Panc1 (cell line): ENCODE measurements at regions of chr12 and their contacts with region 1.

Region 1: GRCh38 chr12:58540480-58541299 is 379.6 kb downstream of the LRIG3 start:
- DNase-seq: peak; percentile 70
- ATAC-seq: peak; percentile 98
- H3K4me3 ChIP-seq: no peak overlapping the region
- H3K27ac ChIP-seq: no peak overlapping the region; the same call in 1 of the 2 replicates
- H3K4me1 ChIP-seq: no peaks in the 10 kb centered on the region
- H3K27me3 ChIP-seq: no peaks in the 10 kb centered on the region
- CTCF ChIP-seq: peak; percentile 89

Region 2: GRCh38 chr12:58648176-58648575 is 107.5 kb after region 1 on chr12:
- CTCF ChIA-PET with region 1: no interaction called
- POLR2A ChIA-PET with region 1: no interaction called
- in situ Hi-C with region 1: no loop called
- intact Hi-C with region 1: no loop called
- DNase-seq: no peak
- ATAC-seq: no peak
- H3K4me3 ChIP-seq: no peak overlapping the region
- H3K27ac ChIP-seq: no peak overlapping the region
- H3K4me1 ChIP-seq: no peaks in the 10 kb centered on the region
- H3K27me3 ChIP-seq: no peaks in the 10 kb centered on the region
- CTCF ChIP-seq: no peak

Region 3: DNA sequence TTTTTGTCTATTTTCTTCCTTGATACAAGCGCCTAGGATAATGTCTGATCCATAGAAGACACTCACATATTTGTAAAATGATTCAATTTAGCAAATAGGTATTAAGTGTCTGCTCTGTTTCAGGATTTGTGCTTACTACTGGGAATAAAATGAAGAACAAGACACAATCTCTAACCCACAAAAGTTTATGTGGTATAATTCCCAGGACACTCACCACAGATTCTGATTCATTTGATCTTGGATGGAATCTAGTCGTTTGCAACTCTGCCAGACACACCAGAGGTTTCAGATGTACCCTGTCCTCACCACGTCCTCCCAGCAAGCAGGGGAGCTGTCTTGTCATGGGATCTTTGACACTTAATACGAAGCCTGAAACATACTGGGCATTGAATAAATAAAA is 171.3 kb after region 1 on chr12:
- CTCF ChIA-PET with region 1: interaction called, 13 read pairs
- POLR2A ChIA-PET with region 1: no interaction called
- in situ Hi-C with region 1: no loop called
- intact Hi-C with region 1: no loop called
- DNase-seq: no peak
- ATAC-seq: no peak
- H3K4me3 ChIP-seq: no peak overlapping the region
- H3K27ac ChIP-seq: no peak overlapping the region
- H3K4me1 ChIP-seq: no peaks in the 10 kb centered on the region
- H3K27me3 ChIP-seq: no peaks in the 10 kb centered on the region
- CTCF ChIP-seq: no peak

Region 4: GRCh38 chr12:59087077-59087673 is 546.5 kb after region 1 on chr12:
- CTCF ChIA-PET with region 1: no interaction called
- POLR2A ChIA-PET with region 1: no interaction called
- in situ Hi-C with region 1: no loop called
- intact Hi-C with region 1: loop called (anchors 10 kb)
- DNase-seq: no peak
- ATAC-seq: no peak
- H3K4me3 ChIP-seq: no peak overlapping the region
- H3K27ac ChIP-seq: no peak overlapping the region
- H3K4me1 ChIP-seq: no peaks in the 10 kb centered on the region
- H3K27me3 ChIP-seq: no peaks in the 10 kb centered on the region
- CTCF ChIP-seq: peak; percentile 50; the same call in 1 of the 2 replicates

Region 5: GRCh38 chr12:59149997-59150642 is 609.4 kb after region 1 on chr12:
- CTCF ChIA-PET with region 1: no interaction called
- POLR2A ChIA-PET with region 1: no interaction called
- in situ Hi-C with region 1: no loop called
- intact Hi-C with region 1: loop called (anchors 1 kb)
- DNase-seq: peak; percentile 71
- ATAC-seq: peak; percentile 89
- H3K4me3 ChIP-seq: no peak overlapping the region
- H3K27ac ChIP-seq: no peak overlapping the region
- H3K4me1 ChIP-seq: no peaks in the 10 kb centered on the region
- H3K27me3 ChIP-seq: no peaks in the 10 kb centered on the region
- CTCF ChIP-seq: peak; percentile 77; the same call in 1 of the 2 replicates